ENCODE measurements at regions of chr12 and their contacts with region 1.

Region 1: DNA sequence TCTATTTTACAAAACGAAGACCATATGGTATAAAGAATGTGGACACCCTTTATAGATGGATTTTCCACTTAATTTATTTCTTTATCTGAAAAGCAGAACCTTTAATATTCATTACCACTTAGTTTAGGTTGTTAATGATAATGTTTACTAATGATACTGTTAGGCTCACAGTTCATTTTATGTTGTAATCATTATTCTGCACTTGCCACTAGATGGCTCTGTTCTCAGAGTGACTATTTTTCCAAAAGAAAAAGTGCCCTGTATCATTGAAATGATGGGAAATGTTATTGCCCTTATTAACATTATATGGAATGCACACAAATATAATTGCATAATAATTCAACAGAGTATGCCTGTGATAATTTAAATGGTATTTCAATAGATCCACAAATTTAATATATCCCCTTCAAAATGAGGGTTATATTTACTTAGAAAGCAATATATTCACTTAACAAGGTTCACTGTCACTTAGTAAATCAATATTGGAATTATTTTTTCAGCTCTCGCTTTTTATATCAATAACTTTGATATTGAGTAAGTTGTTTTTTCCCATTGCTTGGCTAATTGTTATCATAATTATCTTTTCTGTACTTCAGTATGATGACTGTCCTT is 95.7 kb downstream of the PDE3A start:
- DNase-seq: no peak
- H3K4me3 ChIP-seq: no peak overlapping the region
- CTCF ChIP-seq: peak; percentile 41

Region 2: GRCh38 chr12:20436316-20436715 is 27.7 kb before region 1 on chr12:
- CTCF ChIA-PET with region 1: no interaction called
- POLR2A ChIA-PET with region 1: no interaction called
- DNase-seq: no peak
- H3K4me3 ChIP-seq: no peak overlapping the region
- CTCF ChIP-seq: no peak

Region 3: GRCh38 chr12:20451761-20452160 is 12.3 kb before region 1 on chr12:
- CTCF ChIA-PET with region 1: interaction called, 27 read pairs
- POLR2A ChIA-PET with region 1: no interaction called
- DNase-seq: peak; percentile 71
- H3K4me3 ChIP-seq: no peak overlapping the region
- CTCF ChIP-seq: no peak

Region 4: GRCh38 chr12:20549107-20549719 is 85.2 kb after region 1 on chr12:
- CTCF ChIA-PET with region 1: interaction called, 12 read pairs
- POLR2A ChIA-PET with region 1: no interaction called
- DNase-seq: no peak
- H3K4me3 ChIP-seq: no peak overlapping the region
- CTCF ChIP-seq: peak; percentile 69

Region 5: GRCh38 chr12:20588042-20588441 is 124.0 kb after region 1 on chr12:
- CTCF ChIA-PET with region 1: interaction called, 10 read pairs
- POLR2A ChIA-PET with region 1: no interaction called
- DNase-seq: no peak
- H3K4me3 ChIP-seq: no peak overlapping the region
- CTCF ChIP-seq: no peak

Measured in AG04449 (cell line).